Gastrocnemius medialis (tissue), 4 donors: ENCODE measurements at regions of chr17 and their contacts with region 1.

Region 1: DNA sequence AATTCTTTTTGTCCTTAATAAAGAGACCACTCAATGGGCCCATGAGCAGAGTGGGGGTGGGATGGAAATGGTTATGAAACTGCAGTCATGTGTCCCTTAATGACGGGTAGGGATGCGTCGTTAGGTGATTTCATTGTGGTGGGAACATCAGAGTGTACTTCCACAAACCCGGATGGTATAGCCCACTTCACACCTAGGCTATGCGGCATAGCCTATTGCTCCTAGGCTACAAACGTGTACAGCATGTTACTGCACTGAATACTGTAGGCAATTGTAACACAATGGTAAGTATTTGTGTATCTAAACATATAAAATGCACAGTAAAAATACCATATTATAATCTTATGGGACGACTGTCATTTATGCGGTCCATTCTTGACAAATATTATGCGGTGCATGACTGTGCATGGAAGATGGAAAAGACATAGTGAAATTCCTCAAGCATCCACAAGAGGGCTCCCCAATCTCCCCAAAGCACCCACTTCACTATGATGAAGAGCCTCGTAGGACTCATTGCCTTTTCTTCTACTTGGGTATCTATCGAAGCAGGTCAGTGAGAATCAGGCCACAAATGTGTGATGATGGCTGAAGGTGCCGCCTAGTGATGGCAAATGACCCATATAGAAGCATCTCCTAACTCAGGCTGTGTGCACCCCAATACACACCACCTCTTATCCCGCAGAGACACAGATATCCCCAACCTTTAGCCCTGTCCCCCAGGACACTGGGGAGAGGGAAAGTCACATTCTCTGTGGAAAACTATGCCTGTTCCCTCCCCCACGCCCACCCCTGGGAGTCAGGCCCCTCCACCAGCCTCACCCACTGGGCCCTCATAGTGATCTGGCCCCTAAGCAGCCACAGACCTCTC is 43.5 kb downstream of the TBX21 start:
- DNase-seq: no peak
- ATAC-seq: peak; percentile 58 to 62
- H3K4me3 ChIP-seq: no peak overlapping the region
- H3K27ac ChIP-seq: no peak overlapping the region
- H3K4me1 ChIP-seq: no peaks in the 10 kb centered on the region
- H3K27me3 ChIP-seq: peaks cover 27 to 35% (median 35%) of the 10 kb centered on the region in 3 donors
- CTCF ChIP-seq: peak in 4 of 5 experiments; percentile 36 to 58 (median 52)
- POLR2A ChIP-seq: no peak

Region 2: DNA sequence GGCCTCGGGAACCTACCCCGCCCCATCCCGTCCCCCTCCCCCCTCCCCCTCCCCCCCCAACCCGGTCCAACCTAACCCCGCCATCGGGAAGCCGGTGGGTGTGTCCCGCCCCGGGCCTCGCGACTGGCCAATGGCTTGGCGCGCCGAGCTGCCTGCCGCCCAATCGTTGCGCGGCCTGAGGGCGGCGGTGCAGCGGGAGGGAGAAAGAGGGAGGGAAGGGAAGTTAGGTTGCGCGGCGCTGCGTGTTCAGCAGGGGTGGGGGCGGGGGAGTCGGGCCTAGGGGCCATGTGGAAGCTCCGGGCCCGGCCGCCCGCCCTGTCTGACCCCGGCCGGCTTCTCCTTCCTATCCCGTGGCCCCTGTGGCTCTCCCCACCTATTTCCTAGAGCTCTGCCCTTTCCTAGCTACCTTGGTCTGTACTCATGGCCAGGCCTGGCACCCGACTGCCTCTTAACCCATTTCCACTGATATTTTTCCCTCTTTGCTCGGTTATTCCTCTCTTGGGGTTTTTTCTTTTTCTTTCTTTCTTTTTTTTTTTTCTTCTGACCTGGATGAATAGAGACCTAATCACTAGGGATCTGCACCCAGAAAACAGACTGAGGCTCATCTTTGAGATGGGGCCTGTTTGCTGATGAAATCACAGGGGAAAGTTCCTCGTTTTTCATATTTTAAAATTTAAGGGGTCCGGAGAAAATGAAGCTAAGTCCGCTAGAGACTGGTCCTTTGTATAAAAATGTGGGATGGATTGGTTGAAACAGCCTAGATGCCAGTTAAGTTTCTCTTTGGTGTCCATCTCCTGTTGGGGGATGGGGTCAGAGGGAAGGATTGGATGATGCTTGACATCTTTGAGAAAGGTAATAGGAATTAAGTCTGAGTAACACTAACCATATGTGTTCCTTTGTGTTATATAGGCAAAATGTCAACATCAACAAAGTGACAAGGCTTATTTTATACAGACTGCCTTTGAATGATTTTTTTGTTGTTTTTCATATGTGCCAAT is 125.7 kb before region 1 on chr17:
- in situ Hi-C with region 1: loop called in 1 of 4 experiments (anchors 25 kb)
- intact Hi-C with region 1: no loop called
- DNase-seq: peak; percentile 94 to 96
- ATAC-seq: peak; percentile 51 to 58
- H3K4me3 ChIP-seq: peak overlapping the region; percentile 78 to 96 (median 88)
- H3K27ac ChIP-seq: peak overlapping the region; percentile 94 to 98 (median 97)
- H3K4me1 ChIP-seq: peaks cover 31 to 35% of the 10 kb centered on the region in 2 donors
- H3K27me3 ChIP-seq: no peaks in the 10 kb centered on the region
- CTCF ChIP-seq: no peak
- POLR2A ChIP-seq: no peak

Region 3: GRCh38 chr17:47821424-47822391 is 45.1 kb after region 1 on chr17 and contains the start of gene OSBPL7:
- in situ Hi-C with region 1: no loop called
- intact Hi-C with region 1: no loop called
- DNase-seq: peak; percentile 66 to 82
- ATAC-seq: peak; percentile 78 to 79
- H3K4me3 ChIP-seq: peak within 1 kb of the TSS; percentile 51 to 64 (median 56)
- H3K27ac ChIP-seq: peak within 1 kb of the TSS; percentile 69 to 81 (median 77)
- H3K4me1 ChIP-seq: peaks cover 21 to 28% of the 10 kb centered on the region in 2 donors
- H3K27me3 ChIP-seq: no peaks in the 10 kb centered on the region
- CTCF ChIP-seq: no peak
- POLR2A ChIP-seq: peak; percentile 43 to 60
- total RNA-seq, gene OSBPL7: 0.89 to 4.6 (median 1.6) TPM